T-cell (primary cell): ENCODE measurements at regions of chr12 and their contacts with region 1.

Region 1: GRCh38 chr12:9049520-9050133 is 60.3 kb downstream of the KLRG1 start:
- DNase-seq: peak in 11 of 35 experiments; percentile 11 to 78 (median 27)
- ATAC-seq: peak in 3 of 4 experiments; percentile 77 to 81 (median 81)
- H3K4me3 ChIP-seq: no peak overlapping the region
- H3K4me3 Mint-ChIP-seq: no peak overlapping the region
- H3K27ac ChIP-seq: no peak overlapping the region
- H3K27ac Mint-ChIP-seq: peak overlapping the region; percentile 73 to 77
- H3K4me1 ChIP-seq: peaks cover 6 to 7% of the 10 kb centered on the region in 2 experiments
- H3K4me1 Mint-ChIP-seq: peaks cover 16 to 35% (median 26%) of the 10 kb centered on the region in 3 donors
- H3K27me3 ChIP-seq: no peaks in the 10 kb centered on the region
- H3K27me3 Mint-ChIP-seq: no peaks in the 10 kb centered on the region

Region 2: GRCh38 chr12:8544295-8544694 is 505.3 kb before region 1 on chr12:
- CTCF ChIA-PET with region 1: interaction called, 4 to 15 read pairs
- POLR2A ChIA-PET with region 1: interaction called in 1 of 2 experiments, 3 read pairs
- DNase-seq: peak; percentile 32 to 81 (median 57)
- ATAC-seq: peak; percentile 72 to 80 (median 78)
- H3K4me3 ChIP-seq: no peak overlapping the region
- H3K4me3 Mint-ChIP-seq: peak overlapping the region in 1 of 3 donors; percentile 25
- H3K27ac ChIP-seq: no peak overlapping the region
- H3K27ac Mint-ChIP-seq: no peak overlapping the region
- H3K4me1 ChIP-seq: peaks cover 0 to 5% of the 10 kb centered on the region in 2 experiments
- H3K4me1 Mint-ChIP-seq: peaks cover 0 to 11% (median 9%) of the 10 kb centered on the region in 3 donors
- H3K27me3 ChIP-seq: no peaks in the 10 kb centered on the region
- H3K27me3 Mint-ChIP-seq: peaks cover 14 to 29% of the 10 kb centered on the region in 2 donors

Region 3: DNA sequence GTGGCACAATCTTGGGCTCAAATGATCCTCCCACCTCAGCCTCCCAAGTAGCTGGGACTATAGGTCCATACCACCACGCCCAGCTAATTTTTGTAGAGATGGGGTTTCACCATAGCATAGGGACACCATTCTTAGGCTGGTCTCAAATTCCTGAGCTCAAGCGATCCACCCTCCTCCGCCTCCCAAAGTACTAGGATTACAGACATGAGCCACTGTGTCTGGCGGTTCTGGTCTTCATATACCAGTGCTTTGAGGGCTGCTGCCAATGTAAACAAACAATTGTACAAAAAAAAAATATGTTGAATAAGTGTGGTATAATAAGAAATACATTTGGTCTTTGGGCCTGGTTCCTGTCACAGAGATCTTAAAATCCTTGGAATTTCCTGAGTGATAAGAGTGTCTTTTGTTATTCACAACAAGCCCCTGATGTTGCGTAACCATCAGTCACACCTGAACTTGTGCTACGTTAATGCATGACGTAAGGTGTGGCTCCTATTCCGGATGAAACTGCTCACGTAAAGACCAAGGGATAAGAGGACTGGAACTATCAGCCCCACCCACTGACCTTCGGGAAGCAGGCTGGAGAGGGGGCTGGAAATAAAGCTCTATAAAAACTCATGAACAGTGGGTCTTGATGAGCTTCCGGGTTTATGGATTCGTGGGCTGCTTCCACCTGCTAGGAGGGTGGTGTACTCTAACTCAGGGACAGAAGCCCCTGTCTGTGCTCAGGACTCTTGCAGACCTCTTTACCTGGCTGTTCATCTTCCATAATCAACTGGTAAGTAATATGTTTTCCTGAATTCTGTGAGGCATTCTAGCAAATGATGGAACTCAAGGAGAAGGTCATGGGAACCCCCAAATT is 368.4 kb before region 1 on chr12:
- CTCF ChIA-PET with region 1: interaction called, 10 read pairs
- POLR2A ChIA-PET with region 1: interaction called in 1 of 2 experiments, 3 read pairs
- DNase-seq: no peak
- ATAC-seq: no peak
- H3K4me3 ChIP-seq: no peak overlapping the region
- H3K4me3 Mint-ChIP-seq: no peak overlapping the region
- H3K27ac ChIP-seq: no peak overlapping the region
- H3K27ac Mint-ChIP-seq: no peak overlapping the region
- H3K4me1 ChIP-seq: peaks cover 0 to 2% of the 10 kb centered on the region in 2 experiments
- H3K4me1 Mint-ChIP-seq: peaks cover 0 to 10% (median 4%) of the 10 kb centered on the region in 3 donors
- H3K27me3 ChIP-seq: peaks cover 0 to 9% of the 10 kb centered on the region in 2 experiments
- H3K27me3 Mint-ChIP-seq: peaks cover 0 to 5% of the 10 kb centered on the region in 2 donors

Region 4: GRCh38 chr12:8890313-8891085 is 159.1 kb before region 1 on chr12:
- CTCF ChIA-PET with region 1: interaction called, 10 to 11 read pairs
- POLR2A ChIA-PET with region 1: no interaction called
- DNase-seq: peak in 34 of 35 experiments; percentile 14 to 79 (median 44)
- ATAC-seq: peak; percentile 81 to 84 (median 82)
- H3K4me3 ChIP-seq: peak overlapping the region; percentile 60 to 65
- H3K4me3 Mint-ChIP-seq: peak overlapping the region; percentile 60 to 90 (median 87)
- H3K27ac ChIP-seq: peak overlapping the region; percentile 23
- H3K27ac Mint-ChIP-seq: peak overlapping the region; percentile 76 to 79
- H3K4me1 ChIP-seq: peaks cover 0 to 3% of the 10 kb centered on the region in 2 experiments
- H3K4me1 Mint-ChIP-seq: peaks cover 0 to 5% (median 4%) of the 10 kb centered on the region in 3 donors
- H3K27me3 ChIP-seq: peaks cover 0 to 4% of the 10 kb centered on the region in 2 experiments
- H3K27me3 Mint-ChIP-seq: no peaks in the 10 kb centered on the region

Region 5: GRCh38 chr12:8949342-8950220 is 100.0 kb before region 1 on chr12 and contains the start of gene M6PR:
- CTCF ChIA-PET with region 1: interaction called, 21 to 119 read pairs
- POLR2A ChIA-PET with region 1: interaction called in 1 of 2 experiments, 3 read pairs
- DNase-seq: peak; percentile 71 to 93 (median 85)
- ATAC-seq: peak; percentile 81 to 85 (median 82)
- H3K4me3 ChIP-seq: peak within 1 kb of the TSS; percentile 84 to 95
- H3K4me3 Mint-ChIP-seq: peak within 1 kb of the TSS; percentile 90 to 95 (median 91)
- H3K27ac ChIP-seq: peak within 1 kb of the TSS; percentile 97
- H3K27ac Mint-ChIP-seq: peak within 1 kb of the TSS; percentile 89 to 97
- H3K4me1 ChIP-seq: peaks cover 41 to 49% of the 10 kb centered on the region in 2 experiments
- H3K4me1 Mint-ChIP-seq: peaks cover 66 to 83% (median 71%) of the 10 kb centered on the region in 3 donors
- H3K27me3 ChIP-seq: no peaks in the 10 kb centered on the region
- H3K27me3 Mint-ChIP-seq: no peaks in the 10 kb centered on the region
- total RNA-seq, gene M6PR: 162 to 189 (median 187) TPM

Region 6: GRCh38 chr12:9027161-9028059 is 22.2 kb before region 1 on chr12:
- CTCF ChIA-PET with region 1: interaction called in 1 of 2 experiments, 12 read pairs
- POLR2A ChIA-PET with region 1: no interaction called
- DNase-seq: peak in 3 of 35 experiments; percentile 3 to 30 (median 23)
- ATAC-seq: no peak
- H3K4me3 ChIP-seq: no peak overlapping the region
- H3K4me3 Mint-ChIP-seq: peak overlapping the region; percentile 2 to 61 (median 17)
- H3K27ac ChIP-seq: peak overlapping the region; percentile 95
- H3K27ac Mint-ChIP-seq: peak overlapping the region; percentile 90 to 96
- H3K4me1 ChIP-seq: peaks cover 51 to 86% of the 10 kb centered on the region in 2 experiments
- H3K4me1 Mint-ChIP-seq: peaks cover 32 to 55% (median 54%) of the 10 kb centered on the region in 3 donors
- H3K27me3 ChIP-seq: no peaks in the 10 kb centered on the region
- H3K27me3 Mint-ChIP-seq: no peaks in the 10 kb centered on the region

Region 7: DNA sequence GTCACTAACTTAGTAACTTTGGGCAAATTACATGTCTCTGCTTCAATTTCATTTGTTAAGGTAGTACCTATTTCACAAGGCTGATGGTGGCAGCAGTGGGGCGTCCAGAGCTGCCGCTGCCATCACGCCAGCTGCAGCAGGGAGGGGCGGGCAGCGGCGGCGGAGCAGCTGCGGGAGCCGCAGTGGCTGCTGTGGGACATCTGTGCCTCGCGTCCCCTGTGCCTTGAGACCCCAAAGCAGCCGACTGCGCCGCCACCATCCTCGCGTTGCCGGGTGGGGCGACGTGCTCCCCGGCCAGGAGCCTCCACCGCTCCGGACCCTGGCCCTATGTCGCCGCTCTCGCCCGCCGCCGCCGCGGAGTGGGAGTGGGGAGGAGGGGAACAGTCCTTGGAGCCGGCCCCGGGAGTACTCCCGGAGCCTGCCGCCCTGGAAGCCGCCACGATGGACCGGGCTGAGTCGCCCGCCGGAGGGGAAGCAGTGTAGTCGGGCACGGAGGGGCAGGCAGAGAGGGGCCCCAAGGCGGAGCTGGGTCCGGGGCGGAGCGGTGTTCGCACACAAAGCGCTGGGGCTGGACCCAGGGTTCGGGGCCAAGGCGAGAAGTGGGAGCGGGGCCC is 14.7 kb after region 1 on chr12:
- CTCF ChIA-PET with region 1: interaction called, 10 to 19 read pairs
- POLR2A ChIA-PET with region 1: interaction called in 1 of 2 experiments, 5 read pairs
- DNase-seq: peak in 33 of 35 experiments; percentile 10 to 67 (median 42)
- ATAC-seq: peak; percentile 85 to 95 (median 92)
- H3K4me3 ChIP-seq: peak overlapping the region; percentile 59 to 75
- H3K4me3 Mint-ChIP-seq: peak overlapping the region; percentile 77 to 88 (median 77)
- H3K27ac ChIP-seq: no peak overlapping the region
- H3K27ac Mint-ChIP-seq: peak overlapping the region; percentile 2 to 59
- H3K4me1 ChIP-seq: peaks cover 2 to 17% of the 10 kb centered on the region in 2 experiments
- H3K4me1 Mint-ChIP-seq: peaks cover 7 to 12% (median 9%) of the 10 kb centered on the region in 3 donors
- H3K27me3 ChIP-seq: peaks cover 0 to 11% of the 10 kb centered on the region in 2 experiments
- H3K27me3 Mint-ChIP-seq: no peaks in the 10 kb centered on the region